Activated CD8-positive, alpha-beta T cell treated with anti-CD3 and anti-CD28 coated beads for 36 hours (primary cell): ENCODE measurements at regions of chr1 and their contacts with region 1.

Region 1: DNA sequence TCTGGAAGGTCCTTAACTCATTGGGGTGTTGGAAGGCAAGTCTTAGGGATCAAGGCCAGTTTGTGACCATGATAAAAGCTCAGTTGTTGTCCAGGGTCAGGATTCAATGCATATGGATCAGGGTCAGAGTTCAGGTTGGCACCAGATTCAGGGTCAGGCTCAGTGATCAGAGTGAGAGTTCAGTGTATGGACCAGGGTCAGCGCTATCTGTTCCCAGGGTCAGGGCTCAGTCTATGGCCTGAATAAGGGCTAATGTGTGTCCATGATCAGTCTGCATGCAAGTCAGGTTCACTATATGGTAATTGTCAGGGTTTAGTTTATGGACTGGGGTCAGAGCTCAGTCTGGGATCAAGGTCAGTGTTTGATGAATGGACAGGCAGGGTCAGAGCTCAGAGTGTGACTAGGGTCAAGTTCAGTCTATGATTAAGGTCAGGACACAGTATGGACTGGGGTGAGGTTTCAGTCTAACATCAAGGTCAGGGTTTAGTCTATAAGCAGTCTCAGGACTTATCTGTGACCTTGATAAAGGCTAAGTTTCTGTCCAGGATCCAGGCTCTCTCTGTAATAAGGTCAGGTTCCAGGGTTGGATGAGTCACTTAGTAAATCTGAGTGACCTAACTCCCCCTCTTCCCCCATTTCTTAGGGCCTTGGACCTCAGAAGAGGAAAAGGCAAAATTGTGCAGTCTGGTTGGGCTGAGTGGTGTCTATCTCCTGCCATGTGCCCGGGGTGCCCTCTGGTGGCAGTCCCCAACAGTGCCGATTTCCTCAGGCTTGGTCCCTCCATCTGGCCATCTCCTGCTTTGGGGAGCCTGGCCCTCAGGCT is 23.8 kb downstream of the KNCN start:
- DNase-seq: peak; percentile 91
- ATAC-seq: peak; percentile 61
- H3K4me3 Mint-ChIP-seq: no peak overlapping the region
- H3K27ac Mint-ChIP-seq: no peak overlapping the region
- H3K4me1 Mint-ChIP-seq: peaks cover 29% of the 10 kb centered on the region
- H3K27me3 Mint-ChIP-seq: peaks cover 37% of the 10 kb centered on the region
- CTCF ChIP-seq: peak; percentile 92

Region 2: DNA sequence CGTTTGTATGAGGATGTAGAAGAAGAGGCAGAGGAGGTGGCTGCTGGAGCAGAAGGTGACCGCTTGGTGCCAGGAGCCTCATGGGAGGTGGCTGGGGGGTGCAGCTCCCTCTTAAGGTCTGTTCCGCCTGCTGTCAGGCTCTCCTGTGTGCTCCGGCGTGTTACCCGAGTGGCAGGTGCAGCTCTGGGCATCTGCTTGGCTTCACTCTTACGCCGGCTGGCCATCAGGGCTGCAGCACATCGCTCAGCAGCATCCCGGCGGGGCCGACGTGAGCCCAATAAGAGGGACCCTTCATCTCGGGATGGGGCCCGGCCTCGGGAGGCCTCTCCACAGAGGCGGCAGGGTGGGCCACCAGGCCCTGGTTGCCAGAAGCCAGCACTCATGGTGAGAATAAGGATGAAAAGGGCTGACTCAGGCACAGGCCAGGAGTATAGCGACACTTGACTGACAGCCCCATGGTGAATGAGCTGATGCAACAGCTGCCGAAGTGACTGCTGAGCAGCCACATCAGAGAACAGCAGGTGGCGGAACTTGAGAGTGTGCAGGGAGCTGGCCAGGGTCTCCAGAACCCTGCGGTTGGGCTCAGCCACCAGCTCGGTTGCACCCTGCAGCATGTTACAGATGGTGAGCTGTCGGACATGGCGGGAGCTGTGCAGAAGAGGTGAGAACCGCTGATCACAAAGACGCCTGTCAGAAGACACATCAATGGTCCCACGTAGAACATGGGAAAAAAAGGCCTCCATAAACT is 241.8 kb before region 1 on chr1:
- CTCF ChIA-PET with region 1: no interaction called
- POLR2A ChIA-PET with region 1: no interaction called
- intact Hi-C with region 1: no loop called
- DNase-seq: peak; percentile 77
- ATAC-seq: peak; percentile 92
- H3K4me3 Mint-ChIP-seq: no peak overlapping the region
- H3K27ac Mint-ChIP-seq: peak overlapping the region; percentile 89
- H3K4me1 Mint-ChIP-seq: peaks cover 21% of the 10 kb centered on the region
- H3K27me3 Mint-ChIP-seq: no peaks in the 10 kb centered on the region
- CTCF ChIP-seq: no peak

Region 3: GRCh38 chr1:46442317-46443161 is 85.1 kb before region 1 on chr1:
- CTCF ChIA-PET with region 1: interaction called, 128 read pairs
- POLR2A ChIA-PET with region 1: interaction called, 4 read pairs
- intact Hi-C with region 1: loop called (anchors 2 kb)
- DNase-seq: peak; percentile 86
- ATAC-seq: peak; percentile 86
- H3K4me3 Mint-ChIP-seq: peak overlapping the region; percentile 79
- H3K27ac Mint-ChIP-seq: peak overlapping the region; percentile 40
- H3K4me1 Mint-ChIP-seq: peaks cover 10% of the 10 kb centered on the region
- H3K27me3 Mint-ChIP-seq: peaks cover 18% of the 10 kb centered on the region
- CTCF ChIP-seq: peak; percentile 99

Region 4: GRCh38 chr1:46477153-46477929 is 50.3 kb before region 1 on chr1:
- CTCF ChIA-PET with region 1: interaction called, 77 read pairs
- POLR2A ChIA-PET with region 1: interaction called, 6 read pairs
- intact Hi-C with region 1: loop called (anchors 1 kb)
- DNase-seq: peak; percentile 86
- ATAC-seq: peak; percentile 99
- H3K4me3 Mint-ChIP-seq: no peak overlapping the region
- H3K27ac Mint-ChIP-seq: no peak overlapping the region
- H3K4me1 Mint-ChIP-seq: no peaks in the 10 kb centered on the region
- H3K27me3 Mint-ChIP-seq: peaks cover 17% of the 10 kb centered on the region
- CTCF ChIP-seq: peak; percentile 92

Region 5: GRCh38 chr1:46494910-46495309 is 32.8 kb before region 1 on chr1:
- CTCF ChIA-PET with region 1: interaction called, 22 read pairs
- POLR2A ChIA-PET with region 1: no interaction called
- intact Hi-C with region 1: no loop called
- DNase-seq: no peak
- ATAC-seq: no peak
- H3K4me3 Mint-ChIP-seq: no peak overlapping the region
- H3K27ac Mint-ChIP-seq: no peak overlapping the region
- H3K4me1 Mint-ChIP-seq: peaks cover 14% of the 10 kb centered on the region
- H3K27me3 Mint-ChIP-seq: peaks cover 51% of the 10 kb centered on the region
- CTCF ChIP-seq: no peak

Region 6: DNA sequence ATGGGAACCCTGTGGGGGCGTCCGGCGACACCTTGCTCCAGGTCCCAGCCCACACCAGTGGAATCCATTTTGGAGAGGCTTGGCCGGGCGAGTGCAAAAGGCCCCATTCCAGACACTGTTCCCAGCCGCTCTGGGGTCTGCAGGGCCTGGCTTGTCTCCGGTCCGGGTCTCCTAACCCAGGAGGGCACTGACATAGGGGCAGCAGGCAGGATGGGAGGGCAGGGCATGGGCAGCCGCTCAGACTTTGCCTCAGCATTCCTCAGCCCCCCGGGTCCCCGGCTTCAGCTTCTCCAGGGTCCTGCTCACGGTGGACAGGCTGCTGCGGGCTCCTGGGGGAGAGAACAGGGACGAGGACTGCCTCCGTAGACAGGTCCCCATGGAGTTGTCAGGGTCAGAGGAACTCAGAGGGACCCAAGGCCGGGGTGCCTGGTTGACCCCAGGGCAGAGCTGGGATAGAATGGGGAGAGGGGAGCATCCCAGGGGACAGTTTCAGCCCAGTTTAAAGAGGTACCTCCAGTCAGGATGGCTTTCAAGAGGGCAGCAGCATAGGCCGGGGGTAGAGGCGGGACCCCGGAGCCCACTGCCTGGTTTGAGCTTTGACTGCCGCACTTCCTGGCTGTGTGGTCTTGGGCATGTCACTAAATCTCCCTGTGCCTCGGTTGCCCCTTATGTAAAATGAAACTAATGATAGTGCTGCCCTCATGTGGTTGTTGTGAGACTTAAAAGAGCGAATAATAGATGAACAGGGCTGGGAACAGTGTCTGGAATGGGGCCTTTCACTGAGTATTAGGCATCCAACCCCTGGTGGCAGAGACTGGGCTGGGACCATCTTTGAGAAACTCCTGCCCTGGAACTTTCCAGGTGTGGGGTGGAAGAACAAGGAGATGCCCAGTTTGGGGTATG is 20.0 kb after region 1 on chr1:
- CTCF ChIA-PET with region 1: interaction called, 22 read pairs
- POLR2A ChIA-PET with region 1: no interaction called
- intact Hi-C with region 1: no loop called
- DNase-seq: peak; percentile 25
- ATAC-seq: peak; percentile 41
- H3K4me3 Mint-ChIP-seq: no peak overlapping the region
- H3K27ac Mint-ChIP-seq: no peak overlapping the region
- H3K4me1 Mint-ChIP-seq: peaks cover 11% of the 10 kb centered on the region
- H3K27me3 Mint-ChIP-seq: peaks cover 35% of the 10 kb centered on the region
- CTCF ChIP-seq: peak; percentile 57

Region 7: GRCh38 chr1:46562498-46562897 is 34.8 kb after region 1 on chr1:
- CTCF ChIA-PET with region 1: no interaction called
- POLR2A ChIA-PET with region 1: no interaction called
- intact Hi-C with region 1: no loop called
- DNase-seq: no peak
- ATAC-seq: no peak
- H3K4me3 Mint-ChIP-seq: no peak overlapping the region
- H3K27ac Mint-ChIP-seq: no peak overlapping the region
- H3K4me1 Mint-ChIP-seq: no peaks in the 10 kb centered on the region
- H3K27me3 Mint-ChIP-seq: no peaks in the 10 kb centered on the region
- CTCF ChIP-seq: no peak

Region 8: DNA sequence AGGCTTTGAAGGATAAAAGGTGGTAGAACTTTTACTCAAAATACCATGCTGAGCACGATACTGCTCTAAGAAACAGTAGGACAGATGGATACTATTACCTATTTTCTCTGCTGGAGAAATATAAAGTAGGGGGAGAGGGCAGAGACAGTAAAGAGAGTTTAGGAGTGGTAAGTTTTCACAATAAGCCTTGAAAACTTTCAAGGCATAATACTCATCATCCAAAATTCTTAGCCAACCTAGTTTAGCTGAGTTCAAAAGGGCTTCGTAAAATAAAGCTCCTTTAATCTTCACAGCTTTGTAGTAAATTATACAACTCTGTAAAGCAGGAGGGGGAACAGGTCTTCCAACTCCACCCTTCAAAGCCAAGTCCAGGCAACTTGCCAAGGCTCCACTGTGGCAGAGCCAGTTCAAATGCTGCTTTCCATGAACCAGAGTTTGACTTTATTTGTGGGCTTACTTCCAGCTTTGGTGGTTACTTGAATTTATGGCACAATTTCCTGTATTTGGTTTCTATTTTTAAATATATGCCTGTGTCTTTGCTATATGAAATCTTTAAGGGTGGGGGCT is 159.5 kb after region 1 on chr1:
- CTCF ChIA-PET with region 1: no interaction called
- POLR2A ChIA-PET with region 1: no interaction called
- intact Hi-C with region 1: no loop called
- DNase-seq: no peak
- ATAC-seq: no peak
- H3K4me3 Mint-ChIP-seq: no peak overlapping the region
- H3K27ac Mint-ChIP-seq: peak overlapping the region; percentile 10
- H3K4me1 Mint-ChIP-seq: peaks cover 10% of the 10 kb centered on the region
- H3K27me3 Mint-ChIP-seq: no peaks in the 10 kb centered on the region
- CTCF ChIP-seq: no peak